Mammary epithelial cell (primary cell): ENCODE measurements at regions of chr1 and their contacts with region 1.

Region 1: DNA sequence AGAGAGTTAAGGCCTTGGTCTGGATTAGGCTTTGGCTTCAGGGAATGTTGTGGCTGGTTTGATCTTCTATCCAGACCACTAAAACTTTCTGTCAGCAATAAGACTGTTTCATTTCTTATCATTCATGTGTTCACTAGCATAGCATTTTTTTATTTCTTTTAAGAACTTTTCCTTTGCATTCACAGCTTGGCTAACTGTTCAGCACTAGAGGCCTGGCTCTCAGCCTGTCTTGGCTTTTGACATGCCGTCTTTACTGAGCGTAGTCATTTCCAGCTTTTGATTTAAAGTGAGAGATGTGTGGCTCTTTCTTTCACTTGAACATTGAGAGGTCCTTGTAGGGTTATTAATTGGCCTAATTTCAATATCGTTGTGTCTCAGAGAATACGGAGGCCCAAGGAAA is 62.5 kb downstream of the RNF220 start:
- DNase-seq: no peak
- H3K4me3 ChIP-seq: no peak overlapping the region
- H3K27ac ChIP-seq: no peak overlapping the region
- H3K4me1 ChIP-seq: no peaks in the 10 kb centered on the region
- H3K27me3 ChIP-seq: no peaks in the 10 kb centered on the region
- CTCF ChIP-seq: no peak

Region 2: DNA sequence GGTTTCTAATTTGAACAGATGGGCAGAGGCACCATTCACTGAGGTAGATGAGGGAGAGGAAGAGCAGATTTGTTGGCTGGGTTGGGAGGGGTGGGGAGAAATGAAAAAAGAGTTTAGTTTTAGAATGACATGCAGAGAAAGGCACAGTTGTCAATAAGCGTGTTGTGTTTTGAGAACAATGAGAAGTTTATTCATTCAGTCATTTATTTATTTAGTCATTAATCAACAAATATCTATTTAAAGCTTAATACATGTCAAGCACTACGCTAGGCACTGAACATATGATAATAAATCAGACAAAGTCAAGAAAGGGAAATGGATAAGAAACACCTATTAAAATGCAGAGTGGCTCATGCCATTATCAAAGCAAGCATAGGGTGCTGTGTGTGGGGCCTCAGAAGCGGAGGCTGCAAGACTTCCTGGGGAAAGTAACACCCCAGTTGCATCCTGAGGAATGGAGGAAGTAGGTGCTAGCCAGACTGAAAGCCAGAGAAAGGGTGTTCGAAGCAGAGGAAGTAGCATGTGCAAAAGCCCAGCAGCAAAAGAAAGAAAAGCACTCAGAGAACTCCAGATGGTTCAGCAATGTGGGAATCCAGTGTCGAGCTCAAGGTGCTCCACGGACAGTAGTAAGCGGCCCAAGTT is 51.6 kb after region 1 on chr1:
- CTCF ChIA-PET with region 1: no interaction called
- dilution Hi-C with region 1: loop called (anchors 5 kb)
- in situ Hi-C with region 1: no loop called
- intact Hi-C with region 1: no loop called
- DNase-seq: no peak
- H3K4me3 ChIP-seq: no peak overlapping the region
- H3K27ac ChIP-seq: no peak overlapping the region
- H3K4me1 ChIP-seq: peaks cover 18% of the 10 kb centered on the region
- H3K27me3 ChIP-seq: no peaks in the 10 kb centered on the region
- CTCF ChIP-seq: no peak